GM12878 (cell line): ENCODE measurements at regions of chr6 and their contacts with region 1.

Region 1: DNA sequence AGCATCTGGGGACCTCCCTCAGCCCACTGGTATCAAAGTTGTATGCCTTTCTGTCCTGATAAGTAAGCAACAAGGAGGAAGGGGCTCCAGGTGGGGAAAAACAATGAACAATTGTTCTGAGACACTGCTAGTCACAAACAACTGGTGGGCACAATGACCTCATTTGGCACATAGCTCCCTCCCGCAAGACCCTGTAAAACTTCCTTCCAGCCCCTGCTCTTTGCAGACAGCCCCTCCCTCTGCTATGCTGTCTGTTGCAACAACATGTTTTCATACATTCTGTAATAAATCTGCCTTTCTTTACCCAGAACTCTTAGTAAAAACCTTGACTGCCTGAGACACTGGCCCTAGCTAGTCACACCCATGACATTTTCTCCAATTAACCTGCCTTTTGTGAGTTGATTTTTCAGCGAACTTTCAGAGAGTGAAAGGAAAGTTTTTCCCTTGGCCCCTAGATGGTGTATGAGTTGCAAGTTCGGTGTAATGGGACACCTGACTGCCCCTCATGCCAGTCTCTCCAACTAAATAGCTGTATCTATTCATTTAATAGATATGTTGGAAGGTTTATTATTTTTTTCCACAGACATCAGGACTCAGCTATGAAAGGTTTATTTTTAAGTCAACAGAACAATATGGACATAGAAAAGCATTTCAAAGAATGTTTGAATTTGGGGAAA is 142.3 kb upstream of the SLC22A16 start:
- DNase-seq: peak; percentile 11
- ATAC-seq: peak; percentile 71
- H3K4me3 ChIP-seq: no peak overlapping the region
- H3K27ac ChIP-seq: no peak overlapping the region
- H3K4me1 ChIP-seq: peaks cover 11% of the 10 kb centered on the region
- H3K27me3 ChIP-seq: no peaks in the 10 kb centered on the region
- CTCF ChIP-seq: peak in 2 of 3 experiments; percentile 34 to 48; a peak in 4 of 6 replicates
- EP300 ChIP-seq: no peak
- POLR2A ChIP-seq: no peak
- RAD21 ChIP-seq: peak; percentile 47

Region 2: DNA sequence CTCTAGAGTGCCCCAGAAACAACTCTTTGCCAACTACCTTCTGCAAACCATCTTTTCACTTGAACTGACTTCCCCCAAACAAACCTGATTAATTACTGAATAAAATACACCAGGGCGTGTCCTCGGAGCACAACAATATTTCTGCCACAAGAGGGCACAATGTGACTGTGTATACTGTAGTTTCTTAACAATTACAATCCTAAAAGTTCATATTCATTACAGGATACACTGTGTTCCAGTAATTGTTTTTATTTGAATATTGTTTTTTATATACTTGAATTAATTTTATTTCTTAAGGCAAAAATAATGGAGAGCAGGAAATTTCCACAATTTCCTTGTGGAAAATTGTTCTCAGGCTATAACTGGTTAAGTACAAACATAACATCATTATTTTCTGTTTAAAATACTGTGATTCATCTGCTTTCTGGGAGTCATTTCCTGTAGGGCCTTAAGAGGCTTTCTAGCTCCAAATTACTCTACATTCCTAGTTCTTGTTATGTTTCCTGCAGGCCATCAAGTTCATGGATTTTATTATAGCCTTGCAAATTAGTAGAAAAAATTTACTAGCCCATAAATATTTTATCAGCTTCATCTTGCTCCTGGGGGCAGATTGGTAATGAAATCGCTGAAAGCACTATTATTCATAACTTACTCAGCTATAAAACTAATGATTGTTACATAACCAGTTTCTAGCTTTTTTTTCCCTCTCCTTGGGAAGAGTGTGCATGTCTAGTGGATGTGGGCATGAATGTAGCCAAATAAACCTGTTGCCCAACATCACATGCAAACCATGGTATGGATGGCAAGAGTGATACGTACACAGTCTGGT is 90.4 kb before region 1 on chr6:
- CTCF ChIA-PET with region 1: interaction called, 3 read pairs
- POLR2A ChIA-PET with region 1: no interaction called
- RAD21 ChIA-PET with region 1: no interaction called
- SMC1A ChIA-PET with region 1: interaction called, 6 read pairs
- in situ Hi-C with region 1: no loop called
- intact Hi-C with region 1: loop called (anchors 2 kb)
- DNase-seq: peak; percentile 28
- ATAC-seq: peak; percentile 89
- H3K4me3 ChIP-seq: no peak overlapping the region
- H3K27ac ChIP-seq: no peak overlapping the region
- H3K4me1 ChIP-seq: no peaks in the 10 kb centered on the region
- H3K27me3 ChIP-seq: peaks cover 0 to 1% of the 10 kb centered on the region in 2 experiments; a peak in 2 of 4 replicates
- CTCF ChIP-seq: peak; percentile 47 to 88 (median 73); a peak in 5 of 6 replicates
- EP300 ChIP-seq: no peak
- POLR2A ChIP-seq: no peak
- RAD21 ChIP-seq: peak; percentile 93

Region 3: DNA sequence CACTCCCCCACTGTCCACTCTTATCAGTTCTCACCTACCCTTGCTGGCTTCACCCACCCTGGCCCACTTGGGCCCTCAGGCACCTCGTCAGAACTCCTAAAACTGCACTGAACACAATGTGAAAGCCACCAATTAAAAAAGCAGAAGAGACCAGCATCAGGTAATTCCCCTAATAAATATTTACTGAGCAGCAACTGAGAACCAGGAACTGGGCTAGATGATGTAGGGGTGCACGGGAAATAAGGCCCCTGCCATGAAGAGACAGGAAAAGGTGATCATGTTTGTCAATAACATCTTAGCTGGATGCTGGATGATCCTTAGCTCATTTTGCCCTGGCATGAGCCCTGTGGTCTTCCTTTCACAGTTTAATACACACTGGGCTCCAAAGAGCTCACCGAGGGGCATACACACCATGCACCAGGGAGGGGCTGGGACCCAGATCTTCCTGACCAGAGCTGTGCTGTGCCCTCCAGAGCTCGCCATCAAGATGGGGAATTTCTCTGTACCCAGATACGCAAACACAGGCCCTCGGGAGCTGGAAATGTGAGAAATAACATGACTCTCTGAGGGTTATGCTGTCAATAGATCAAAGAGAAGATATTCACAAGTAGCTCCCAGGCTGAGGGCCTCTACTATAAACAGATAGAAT is 28.7 kb before region 1 on chr6:
- CTCF ChIA-PET with region 1: interaction called, 3 read pairs
- POLR2A ChIA-PET with region 1: no interaction called
- RAD21 ChIA-PET with region 1: no interaction called
- SMC1A ChIA-PET with region 1: interaction called, 7 read pairs
- in situ Hi-C with region 1: no loop called
- intact Hi-C with region 1: loop called (anchors 1 kb)
- DNase-seq: peak; percentile 56
- ATAC-seq: peak; percentile 92
- H3K4me3 ChIP-seq: no peak overlapping the region
- H3K27ac ChIP-seq: peak overlapping the region; percentile 29
- H3K4me1 ChIP-seq: peaks cover 20% of the 10 kb centered on the region
- H3K27me3 ChIP-seq: no peaks in the 10 kb centered on the region
- CTCF ChIP-seq: no peak
- EP300 ChIP-seq: no peak; a peak in 2 of 4 replicates
- POLR2A ChIP-seq: no peak
- RAD21 ChIP-seq: no peak

Region 4: GRCh38 chr6:110642711-110643110 is 24.0 kb after region 1 on chr6:
- CTCF ChIA-PET with region 1: no interaction called
- POLR2A ChIA-PET with region 1: no interaction called
- RAD21 ChIA-PET with region 1: no interaction called
- SMC1A ChIA-PET with region 1: no interaction called
- in situ Hi-C with region 1: no loop called
- intact Hi-C with region 1: no loop called
- DNase-seq: no peak
- ATAC-seq: no peak
- H3K4me3 ChIP-seq: no peak overlapping the region
- H3K27ac ChIP-seq: no peak overlapping the region
- H3K4me1 ChIP-seq: no peaks in the 10 kb centered on the region
- H3K27me3 ChIP-seq: no peaks in the 10 kb centered on the region
- CTCF ChIP-seq: no peak
- EP300 ChIP-seq: no peak
- POLR2A ChIP-seq: no peak
- RAD21 ChIP-seq: no peak

Region 5: GRCh38 chr6:110949679-110950285 is 331.1 kb after region 1 on chr6:
- CTCF ChIA-PET with region 1: interaction called, 13 read pairs
- POLR2A ChIA-PET with region 1: no interaction called
- RAD21 ChIA-PET with region 1: no interaction called
- SMC1A ChIA-PET with region 1: interaction called, 6 read pairs
- in situ Hi-C with region 1: no loop called
- intact Hi-C with region 1: loop called (anchors 10 kb)
- DNase-seq: no peak
- ATAC-seq: no peak
- H3K4me3 ChIP-seq: no peak overlapping the region
- H3K27ac ChIP-seq: no peak overlapping the region
- H3K4me1 ChIP-seq: peaks cover 6% of the 10 kb centered on the region
- H3K27me3 ChIP-seq: no peaks in the 10 kb centered on the region
- CTCF ChIP-seq: peak; percentile 27 to 58 (median 51); a peak in 4 of 6 replicates
- EP300 ChIP-seq: no peak
- POLR2A ChIP-seq: no peak
- RAD21 ChIP-seq: peak; percentile 64